Panc1 (cell line): ENCODE measurements at regions of chr14 and their contacts with region 1.

Region 1: DNA sequence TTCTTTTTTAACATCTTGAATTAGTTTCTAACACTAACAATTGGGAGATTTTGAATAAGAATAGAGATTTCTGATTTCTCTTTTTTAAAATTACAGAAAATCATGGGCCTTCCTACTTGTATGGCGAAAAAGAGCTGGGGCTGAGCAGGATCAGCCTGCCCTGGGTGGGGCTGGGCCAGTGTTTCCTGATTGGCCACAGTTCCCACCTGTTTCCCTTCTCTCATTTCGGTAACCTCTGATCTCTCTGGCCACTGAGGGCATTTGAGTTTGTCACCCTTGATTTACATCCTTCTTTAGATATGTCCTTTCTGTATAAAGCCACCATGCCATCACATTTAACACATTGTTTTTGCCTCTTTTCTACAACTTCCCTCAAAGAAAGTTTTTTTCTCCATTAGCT is 254.2 kb downstream of the ZFP36L1 start:
- DNase-seq: no peak
- ATAC-seq: no peak
- H3K4me3 ChIP-seq: no peak overlapping the region
- H3K27ac ChIP-seq: no peak overlapping the region
- H3K4me1 ChIP-seq: no peaks in the 10 kb centered on the region
- H3K27me3 ChIP-seq: no peaks in the 10 kb centered on the region
- CTCF ChIP-seq: no peak

Region 2: DNA sequence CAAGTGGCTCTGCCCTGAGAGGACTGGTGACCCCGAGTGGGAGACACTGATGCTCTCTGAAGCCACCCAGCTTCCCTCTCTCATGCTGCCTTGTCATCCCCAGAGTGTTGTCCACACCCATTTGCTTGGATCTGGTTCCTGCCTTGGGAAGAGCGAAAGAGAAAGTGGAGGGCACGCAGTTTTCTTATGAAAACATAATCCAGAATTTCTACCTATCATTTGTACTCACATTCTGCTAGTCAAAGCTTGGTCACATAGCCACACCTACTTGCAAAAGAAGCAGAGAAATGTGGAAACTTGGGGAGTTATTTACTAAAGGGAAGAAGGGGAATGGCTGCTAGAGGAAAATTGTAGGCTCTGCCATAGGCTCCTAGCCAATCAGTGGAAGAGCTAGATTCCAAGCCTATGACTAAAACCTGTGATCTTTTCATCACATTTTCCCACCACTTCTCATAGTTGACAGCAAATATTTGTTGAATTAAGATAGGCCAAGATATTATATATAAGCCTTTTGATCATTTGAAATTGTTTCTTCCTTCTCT is 72.1 kb before region 1 on chr14:
- CTCF ChIA-PET with region 1: no interaction called
- POLR2A ChIA-PET with region 1: no interaction called
- in situ Hi-C with region 1: no loop called
- intact Hi-C with region 1: no loop called
- DNase-seq: no peak
- ATAC-seq: no peak
- H3K4me3 ChIP-seq: no peak overlapping the region
- H3K27ac ChIP-seq: peak overlapping the region; percentile 63; the same call in 1 of the 2 replicates
- H3K4me1 ChIP-seq: peaks cover 8% of the 10 kb centered on the region
- H3K27me3 ChIP-seq: no peaks in the 10 kb centered on the region
- CTCF ChIP-seq: no peak

Region 3: GRCh38 chr14:68526420-68527105 is 12.1 kb before region 1 on chr14:
- CTCF ChIA-PET with region 1: no interaction called
- POLR2A ChIA-PET with region 1: interaction called, 11 read pairs
- in situ Hi-C with region 1: no loop called
- intact Hi-C with region 1: no loop called
- DNase-seq: no peak
- ATAC-seq: no peak
- H3K4me3 ChIP-seq: no peak overlapping the region
- H3K27ac ChIP-seq: no peak overlapping the region; the same call in 1 of the 2 replicates
- H3K4me1 ChIP-seq: no peaks in the 10 kb centered on the region
- H3K27me3 ChIP-seq: no peaks in the 10 kb centered on the region
- CTCF ChIP-seq: no peak